ENCODE measurements at regions of chr6 and their contacts with region 1.

Region 1: GRCh38 chr6:134015719-134016557 is 36.5 kb downstream of the SLC2A12 start:
- DNase-seq: no peak
- H3K4me3 ChIP-seq: no peak overlapping the region
- H3K27ac ChIP-seq: no peak overlapping the region
- H3K4me1 ChIP-seq: peaks cover 9 to 17% (median 11%) of the 10 kb centered on the region in 4 experiments
- H3K27me3 ChIP-seq: peaks cover 0 to 32% (median 10%) of the 10 kb centered on the region in 5 experiments

Region 2: GRCh38 chr6:134002821-134003220 is 13.1 kb before region 1 on chr6:
- CTCF ChIA-PET with region 1: interaction called, 17 read pairs
- POLR2A ChIA-PET with region 1: no interaction called
- DNase-seq: no peak
- H3K4me3 ChIP-seq: no peak overlapping the region
- H3K27ac ChIP-seq: no peak overlapping the region
- H3K4me1 ChIP-seq: peaks cover 0 to 3% (median 0%) of the 10 kb centered on the region in 4 experiments
- H3K27me3 ChIP-seq: peaks cover 0 to 52% (median 14%) of the 10 kb centered on the region in 5 experiments

Measured in common myeloid progenitor, CD34-positive (primary cell).